HCT116 (cell line): ENCODE measurements at regions of chr4 and their contacts with region 1.

Region 1: DNA sequence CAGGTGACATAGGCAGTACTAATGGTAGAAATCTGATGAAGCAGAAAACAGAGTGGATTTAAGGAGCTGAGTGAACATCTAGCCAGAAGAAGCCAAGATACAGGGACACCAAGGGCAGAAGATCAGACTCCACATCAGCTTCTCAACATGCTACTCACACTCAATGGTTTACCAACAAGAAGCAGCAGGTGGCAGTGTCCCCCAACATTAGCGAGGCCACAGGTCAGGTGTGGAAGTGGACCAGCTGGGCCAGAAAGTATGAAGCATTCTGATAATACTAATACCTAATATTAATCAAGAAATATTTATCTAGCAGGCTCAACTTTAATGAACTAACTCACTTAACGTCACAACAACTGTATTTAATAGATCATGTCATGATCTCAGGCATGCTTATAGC is 73.4 kb upstream of the TTC29 start:
- DNase-seq: peak; percentile 36
- ATAC-seq: peak; percentile 94
- H3K4me3 ChIP-seq: no peak overlapping the region
- H3K27ac ChIP-seq: no peak overlapping the region
- H3K4me1 ChIP-seq: no peaks in the 10 kb centered on the region
- H3K27me3 ChIP-seq: peaks cover 32% of the 10 kb centered on the region
- CTCF ChIP-seq: peak; percentile 65 to 72 (median 67); a peak in 5 of 6 replicates
- POLR2A ChIP-seq: no peak
- RAD21 ChIP-seq: peak; percentile 89

Region 2: DNA sequence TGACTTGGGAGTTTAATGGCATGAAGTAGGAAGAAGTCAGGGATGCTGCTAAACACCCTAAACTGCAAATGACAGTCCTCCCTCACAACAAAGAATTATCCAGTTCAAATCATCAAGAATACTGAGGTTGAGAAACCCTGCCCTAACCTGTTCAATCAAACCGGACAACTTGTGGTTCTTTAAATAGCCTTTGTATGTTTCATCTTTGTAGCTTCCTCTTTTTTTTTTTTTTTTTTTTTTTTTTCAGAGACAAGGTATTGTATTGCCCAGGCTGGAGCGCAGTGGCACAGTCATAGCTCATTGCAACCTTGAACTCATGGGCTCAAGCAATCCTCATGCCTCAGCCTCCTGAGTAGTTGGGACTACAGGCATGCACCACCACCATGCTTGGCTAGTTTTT is 20.9 kb before region 1 on chr4:
- CTCF ChIA-PET with region 1: no interaction called
- POLR2A ChIA-PET with region 1: no interaction called
- RAD21 ChIA-PET with region 1: no interaction called
- intact Hi-C with region 1: no loop called
- DNase-seq: no peak
- ATAC-seq: no peak
- H3K4me3 ChIP-seq: no peak overlapping the region
- H3K27ac ChIP-seq: no peak overlapping the region
- H3K4me1 ChIP-seq: no peaks in the 10 kb centered on the region
- H3K27me3 ChIP-seq: no peaks in the 10 kb centered on the region
- CTCF ChIP-seq: no peak
- POLR2A ChIP-seq: no peak
- RAD21 ChIP-seq: no peak

Region 3: DNA sequence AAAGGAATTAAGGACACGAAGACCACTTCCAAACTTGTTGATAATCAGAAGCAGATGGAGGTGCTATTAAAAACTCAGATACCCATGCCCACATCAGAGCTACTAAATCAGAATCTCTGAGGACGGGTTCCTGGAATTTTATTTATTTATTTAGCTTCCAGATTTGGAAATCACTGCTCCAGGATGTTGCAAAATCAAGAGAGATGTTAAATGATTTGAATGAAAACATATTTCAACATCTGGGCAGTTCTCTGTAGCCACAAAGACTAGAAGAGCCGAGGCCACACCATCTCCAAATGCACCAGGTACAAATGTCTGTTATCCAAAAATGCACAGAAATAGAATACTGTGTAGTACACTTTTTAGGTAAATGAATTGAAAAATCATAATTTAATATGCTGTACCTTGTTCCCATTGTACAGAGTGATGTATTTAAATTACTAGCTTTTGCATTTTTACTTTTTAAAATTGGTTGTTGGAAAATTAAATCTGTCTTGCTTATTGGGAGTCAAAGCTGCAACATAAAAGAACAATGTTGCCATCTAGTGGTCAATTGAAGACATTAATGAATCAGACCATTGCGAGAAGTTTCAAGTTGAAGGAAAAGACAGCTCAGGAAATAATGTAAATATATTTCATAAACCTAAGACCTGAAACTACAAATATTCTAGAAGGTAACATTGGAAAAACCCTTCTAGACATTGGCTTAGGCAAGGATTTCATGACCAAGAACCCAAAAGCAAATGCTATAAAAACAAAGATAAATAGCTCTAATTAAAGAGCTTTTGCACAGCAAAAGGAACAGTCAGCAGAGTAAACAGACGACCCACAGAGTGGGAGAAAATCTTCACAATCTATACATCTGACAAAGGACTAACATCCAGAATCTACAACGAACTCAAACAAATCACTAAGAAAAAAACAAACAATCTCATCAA is 77.9 kb after region 1 on chr4:
- CTCF ChIA-PET with region 1: interaction called, 125 read pairs
- POLR2A ChIA-PET with region 1: no interaction called
- RAD21 ChIA-PET with region 1: interaction called, 12 to 17 read pairs
- intact Hi-C with region 1: loop called (anchors 1 kb)
- DNase-seq: peak; percentile 32
- ATAC-seq: peak; percentile 76
- H3K4me3 ChIP-seq: no peak overlapping the region
- H3K27ac ChIP-seq: no peak overlapping the region
- H3K4me1 ChIP-seq: no peaks in the 10 kb centered on the region
- H3K27me3 ChIP-seq: peaks cover 37% of the 10 kb centered on the region
- CTCF ChIP-seq: peak; percentile 50 to 72 (median 55); a peak in 5 of 6 replicates
- POLR2A ChIP-seq: no peak
- RAD21 ChIP-seq: peak; percentile 81

Region 4: DNA sequence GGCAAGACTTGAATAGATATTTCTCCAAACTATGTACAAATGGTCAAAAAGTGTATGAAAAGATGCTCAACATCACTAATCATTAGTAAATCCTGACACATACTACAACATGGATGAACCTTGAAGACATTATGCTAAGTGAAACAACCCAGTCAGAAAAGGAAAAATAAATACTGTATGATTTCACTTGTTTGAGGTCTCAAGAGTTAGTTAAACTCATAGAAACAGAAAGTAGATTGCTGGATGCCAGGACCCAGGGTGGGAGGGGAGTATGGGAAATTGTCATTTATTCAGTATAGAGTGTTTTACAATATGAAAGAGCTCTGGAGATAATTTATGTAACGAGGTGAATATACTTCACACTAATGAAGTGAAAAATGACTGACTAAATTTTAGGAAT is 632.5 kb after region 1 on chr4:
- CTCF ChIA-PET with region 1: no interaction called
- POLR2A ChIA-PET with region 1: no interaction called
- RAD21 ChIA-PET with region 1: no interaction called
- intact Hi-C with region 1: no loop called
- DNase-seq: no peak
- ATAC-seq: no peak
- H3K4me3 ChIP-seq: no peak overlapping the region
- H3K27ac ChIP-seq: no peak overlapping the region
- H3K4me1 ChIP-seq: peaks cover 0 to 5% of the 10 kb centered on the region in 2 experiments; a peak in 1 of 4 replicates
- H3K27me3 ChIP-seq: no peaks in the 10 kb centered on the region
- CTCF ChIP-seq: no peak
- POLR2A ChIP-seq: no peak
- RAD21 ChIP-seq: no peak